Naive thymus-derived CD4-positive, alpha-beta T cell (primary cell): ENCODE measurements at regions of chr22 and their contacts with region 1.

Region 1: DNA sequence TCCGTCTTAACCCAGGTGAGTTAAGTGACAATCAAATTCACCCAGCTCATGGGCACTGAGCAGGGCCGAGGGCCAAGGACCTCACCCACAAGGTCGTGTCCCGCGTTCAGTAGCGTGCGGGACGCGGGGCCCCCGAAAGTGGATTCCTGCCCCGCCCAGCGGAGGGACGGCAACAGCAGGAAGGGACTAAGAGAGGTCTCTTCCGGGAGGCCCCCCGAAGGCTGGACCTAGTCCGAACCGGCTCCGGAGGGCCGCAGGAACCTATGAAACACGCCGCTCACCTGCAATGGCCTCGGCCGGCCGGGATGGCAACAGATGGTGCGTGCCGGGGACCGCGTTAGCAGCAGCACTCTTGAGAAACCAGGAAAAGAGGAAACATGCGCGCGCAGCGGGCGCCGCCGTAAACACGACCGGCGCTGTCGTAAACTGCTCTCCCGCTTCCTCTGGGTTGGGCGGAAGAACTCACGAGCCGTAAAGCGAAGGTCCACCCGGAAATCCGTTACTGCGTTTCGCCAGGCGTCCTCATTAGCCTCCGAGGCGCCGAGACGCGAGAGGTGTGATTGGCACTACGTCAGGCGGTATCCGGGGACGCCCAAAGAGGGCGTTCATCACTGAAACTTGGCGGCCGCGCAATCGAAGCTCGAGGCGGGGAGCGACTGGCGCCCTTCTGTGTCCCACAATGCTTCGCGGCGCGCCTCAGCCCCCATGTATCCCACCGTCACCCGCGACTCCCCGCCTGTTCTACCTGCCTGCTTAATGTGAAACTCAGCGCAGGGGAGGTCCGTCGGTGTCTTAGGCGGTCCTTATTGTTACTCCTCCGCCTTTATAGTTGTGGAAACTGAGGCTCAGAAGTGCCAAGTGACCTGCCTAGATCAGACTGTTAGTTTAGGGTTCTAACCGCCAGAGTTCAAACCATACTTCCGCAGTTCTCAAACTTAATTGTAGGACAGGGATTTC is at the start of gene EIF3D:
- DNase-seq: peak; percentile 93 to 100 (median 99)
- ATAC-seq: peak; percentile 94
- H3K4me3 ChIP-seq: peak within 1 kb of the TSS; percentile 84
- H3K4me3 Mint-ChIP-seq: peak within 1 kb of the TSS; percentile 78 to 98 (median 96)
- H3K27ac ChIP-seq: peak within 1 kb of the TSS; percentile 92
- H3K27ac Mint-ChIP-seq: peak within 1 kb of the TSS; percentile 94 to 99 (median 98)
- H3K4me1 ChIP-seq: peaks cover 4 to 12% of the 10 kb centered on the region in 2 donors
- H3K4me1 Mint-ChIP-seq: peaks cover 11 to 23% (median 21%) of the 10 kb centered on the region in 7 donors
- H3K27me3 ChIP-seq: no peaks in the 10 kb centered on the region
- H3K27me3 Mint-ChIP-seq: peaks cover 0 to 4% (median 0%) of the 10 kb centered on the region in 5 donors
- total RNA-seq, gene EIF3D: 220 to 257 (median 232) TPM

Region 2: GRCh38 chr22:35648066-35649025 is 880.7 kb before region 1 on chr22 and contains the start of gene APOL6:
- CTCF ChIA-PET with region 1: no interaction called
- POLR2A ChIA-PET with region 1: no interaction called
- intact Hi-C with region 1: loop called in 1 of 2 experiments (anchors 1 kb)
- DNase-seq: peak; percentile 31 to 81 (median 79)
- ATAC-seq: peak; percentile 80
- H3K4me3 ChIP-seq: peak within 1 kb of the TSS; percentile 93
- H3K4me3 Mint-ChIP-seq: peak within 1 kb of the TSS; percentile 95 to 100 (median 100)
- H3K27ac ChIP-seq: peak within 1 kb of the TSS; percentile 96
- H3K27ac Mint-ChIP-seq: peak within 1 kb of the TSS; percentile 97 to 100 (median 100)
- H3K4me1 ChIP-seq: peaks cover 27% of the 10 kb centered on the region in 2 donors
- H3K4me1 Mint-ChIP-seq: peaks cover 17 to 54% (median 41%) of the 10 kb centered on the region in 7 donors
- H3K27me3 ChIP-seq: no peaks in the 10 kb centered on the region
- H3K27me3 Mint-ChIP-seq: no peaks in the 10 kb centered on the region
- total RNA-seq, gene APOL6: 33.4 to 99.8 (median 38.2) TPM

Region 3: DNA sequence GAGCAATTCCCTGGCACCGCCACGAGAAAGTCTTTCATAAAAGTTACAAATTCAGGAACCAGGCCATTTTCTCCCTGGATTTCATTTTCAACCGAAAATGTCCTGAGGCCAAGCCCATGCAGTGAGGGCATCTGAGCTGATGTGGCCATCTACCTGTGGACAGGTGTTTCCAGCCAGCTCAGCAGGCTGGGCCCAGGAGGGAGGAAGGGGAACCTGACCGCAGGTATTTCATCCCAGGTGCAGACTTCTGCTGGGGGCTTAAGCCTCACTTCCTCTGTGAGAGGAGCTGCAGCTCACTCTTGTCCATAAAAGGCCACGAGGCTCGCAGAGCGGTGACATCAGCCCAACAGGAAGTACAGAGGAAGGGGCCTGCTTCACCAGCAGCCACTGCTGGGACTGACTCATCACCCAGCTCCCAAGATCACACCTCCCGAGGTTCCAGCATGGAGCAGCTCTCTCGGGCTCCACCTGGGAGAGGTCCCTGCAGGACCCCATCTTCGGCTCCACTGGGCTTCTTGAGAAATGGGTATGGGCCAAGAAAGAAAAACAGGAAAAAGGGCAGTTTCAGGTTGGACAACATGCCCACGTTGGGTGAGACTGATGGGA is 197.7 kb before region 1 on chr22:
- CTCF ChIA-PET with region 1: no interaction called
- POLR2A ChIA-PET with region 1: no interaction called
- intact Hi-C with region 1: loop called in 1 of 2 experiments (anchors 2 kb)
- DNase-seq: peak; percentile 42 to 83 (median 73)
- ATAC-seq: peak; percentile 78
- H3K4me3 ChIP-seq: peak overlapping the region; percentile 57
- H3K4me3 Mint-ChIP-seq: peak overlapping the region; percentile 83 to 95 (median 92)
- H3K27ac ChIP-seq: peak overlapping the region; percentile 82
- H3K27ac Mint-ChIP-seq: peak overlapping the region; percentile 96 to 100 (median 99)
- H3K4me1 ChIP-seq: peaks cover 87 to 92% of the 10 kb centered on the region in 2 donors
- H3K4me1 Mint-ChIP-seq: peaks cover 84 to 100% (median 98%) of the 10 kb centered on the region in 7 donors
- H3K27me3 ChIP-seq: no peaks in the 10 kb centered on the region
- H3K27me3 Mint-ChIP-seq: no peaks in the 10 kb centered on the region

Region 4: DNA sequence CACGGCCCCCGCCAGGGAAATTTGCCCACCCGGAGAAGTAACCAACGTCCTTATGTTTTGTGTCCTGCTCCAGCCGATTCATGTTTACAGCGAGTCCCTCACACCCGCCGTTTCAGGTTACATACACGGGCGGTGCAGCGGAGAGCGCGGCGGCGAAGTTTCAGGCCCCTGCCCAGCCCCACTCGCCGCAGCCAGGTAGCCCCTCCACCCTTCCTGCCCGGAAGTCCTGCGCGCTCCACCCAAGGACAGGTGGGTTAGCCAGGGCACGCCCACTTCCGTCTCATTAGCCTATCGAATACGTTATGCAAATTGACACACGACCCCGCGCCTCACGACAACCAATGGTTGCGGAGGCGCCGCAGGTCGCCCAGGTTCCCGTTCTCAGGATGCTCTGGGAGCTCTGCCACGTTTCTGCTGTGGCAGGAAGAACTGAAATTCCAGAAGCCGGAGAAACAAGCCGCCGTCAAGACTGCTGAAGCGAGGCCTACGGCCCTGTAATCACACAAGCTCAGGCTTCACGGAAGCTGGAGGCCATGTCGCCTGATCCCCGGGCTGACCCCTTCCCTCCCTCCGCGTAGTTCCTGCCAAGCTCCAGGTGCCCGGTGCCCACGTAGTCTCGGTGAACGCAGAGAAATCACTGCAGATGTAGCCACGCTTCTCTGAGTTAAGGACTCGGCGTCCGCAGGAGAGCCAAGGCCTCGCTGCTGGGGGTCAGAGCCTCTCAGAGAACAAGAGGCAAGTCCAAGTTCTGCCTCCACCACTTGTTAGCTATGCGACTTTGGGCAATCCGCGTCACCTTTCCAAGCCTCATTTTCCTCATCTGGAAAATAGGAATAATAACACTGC is 118.9 kb before region 1 on chr22:
- CTCF ChIA-PET with region 1: no interaction called
- POLR2A ChIA-PET with region 1: no interaction called
- intact Hi-C with region 1: no loop called
- DNase-seq: peak; percentile 46 to 77 (median 70)
- ATAC-seq: peak; percentile 89
- H3K4me3 ChIP-seq: peak overlapping the region; percentile 28
- H3K4me3 Mint-ChIP-seq: peak overlapping the region; percentile 59 to 82 (median 74)
- H3K27ac ChIP-seq: peak overlapping the region; percentile 70
- H3K27ac Mint-ChIP-seq: peak overlapping the region; percentile 69 to 92 (median 87)
- H3K4me1 ChIP-seq: peaks cover 31 to 40% of the 10 kb centered on the region in 2 donors
- H3K4me1 Mint-ChIP-seq: peaks cover 26 to 63% (median 55%) of the 10 kb centered on the region in 7 donors
- H3K27me3 ChIP-seq: no peaks in the 10 kb centered on the region
- H3K27me3 Mint-ChIP-seq: no peaks in the 10 kb centered on the region

Region 5: GRCh38 chr22:36506637-36507517 is 22.2 kb before region 1 on chr22 and contains the start of gene FOXRED2:
- CTCF ChIA-PET with region 1: interaction called, 7 read pairs
- POLR2A ChIA-PET with region 1: interaction called, 22 read pairs
- intact Hi-C with region 1: loop called (anchors 1 kb)
- DNase-seq: peak; percentile 85 to 95 (median 91)
- ATAC-seq: peak; percentile 98
- H3K4me3 ChIP-seq: peak within 1 kb of the TSS; percentile 67
- H3K4me3 Mint-ChIP-seq: peak within 1 kb of the TSS; percentile 39 to 84 (median 71)
- H3K27ac ChIP-seq: peak within 1 kb of the TSS; percentile 72
- H3K27ac Mint-ChIP-seq: peak within 1 kb of the TSS; percentile 26 to 84 (median 62)
- H3K4me1 ChIP-seq: peaks cover 5 to 11% of the 10 kb centered on the region in 2 donors
- H3K4me1 Mint-ChIP-seq: peaks cover 8 to 23% (median 14%) of the 10 kb centered on the region in 7 donors
- H3K27me3 ChIP-seq: no peaks in the 10 kb centered on the region
- H3K27me3 Mint-ChIP-seq: no peaks in the 10 kb centered on the region
- total RNA-seq, gene FOXRED2: 2.3 to 13.1 (median 11.4) TPM

Region 6: DNA sequence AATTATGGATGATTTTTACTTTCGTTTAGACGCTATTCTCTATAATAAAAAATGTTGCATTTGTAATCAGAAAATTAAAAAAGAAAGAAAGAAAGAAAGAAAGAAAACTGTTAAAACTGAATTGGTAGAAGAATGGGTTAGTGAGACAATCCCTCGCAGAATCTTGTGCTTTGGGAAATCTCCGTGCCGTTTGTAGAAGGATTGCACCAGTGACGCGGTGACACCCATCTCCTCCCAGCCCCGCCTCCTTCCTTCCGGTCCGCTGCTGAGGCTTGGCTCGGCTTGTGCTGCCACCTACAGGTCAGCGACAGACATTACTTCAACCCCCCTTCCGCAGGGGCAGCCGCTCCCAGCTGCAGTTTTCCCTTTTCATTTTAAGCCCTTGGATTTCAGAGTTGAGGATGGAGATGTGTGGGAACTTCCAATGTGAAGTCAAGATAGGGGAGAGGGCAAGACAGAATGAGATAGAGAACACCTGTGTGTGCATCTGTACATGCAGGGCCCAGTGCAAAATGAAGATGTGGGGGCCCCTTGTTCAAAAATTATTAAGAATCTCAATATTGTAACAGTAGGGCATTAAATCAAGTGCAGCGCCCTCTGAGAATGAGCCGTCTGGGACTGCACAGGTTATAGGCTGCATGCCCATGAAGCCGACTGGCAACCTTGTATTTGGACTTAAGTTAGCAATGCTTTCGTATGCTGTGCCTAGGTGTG is 449.0 kb after region 1 on chr22:
- CTCF ChIA-PET with region 1: no interaction called
- POLR2A ChIA-PET with region 1: no interaction called
- intact Hi-C with region 1: loop called (anchors 5 kb)
- DNase-seq: peak; percentile 76 to 90 (median 88)
- ATAC-seq: peak; percentile 98
- H3K4me3 ChIP-seq: peak overlapping the region; percentile 69
- H3K4me3 Mint-ChIP-seq: peak overlapping the region; percentile 87 to 99 (median 96)
- H3K27ac ChIP-seq: peak overlapping the region; percentile 77
- H3K27ac Mint-ChIP-seq: peak overlapping the region; percentile 81 to 97 (median 96)
- H3K4me1 ChIP-seq: peaks cover 0 to 4% of the 10 kb centered on the region in 2 donors
- H3K4me1 Mint-ChIP-seq: peaks cover 5 to 16% (median 9%) of the 10 kb centered on the region in 7 donors
- H3K27me3 ChIP-seq: no peaks in the 10 kb centered on the region
- H3K27me3 Mint-ChIP-seq: peaks cover 0 to 25% (median 4%) of the 10 kb centered on the region in 5 donors

Region 7: DNA sequence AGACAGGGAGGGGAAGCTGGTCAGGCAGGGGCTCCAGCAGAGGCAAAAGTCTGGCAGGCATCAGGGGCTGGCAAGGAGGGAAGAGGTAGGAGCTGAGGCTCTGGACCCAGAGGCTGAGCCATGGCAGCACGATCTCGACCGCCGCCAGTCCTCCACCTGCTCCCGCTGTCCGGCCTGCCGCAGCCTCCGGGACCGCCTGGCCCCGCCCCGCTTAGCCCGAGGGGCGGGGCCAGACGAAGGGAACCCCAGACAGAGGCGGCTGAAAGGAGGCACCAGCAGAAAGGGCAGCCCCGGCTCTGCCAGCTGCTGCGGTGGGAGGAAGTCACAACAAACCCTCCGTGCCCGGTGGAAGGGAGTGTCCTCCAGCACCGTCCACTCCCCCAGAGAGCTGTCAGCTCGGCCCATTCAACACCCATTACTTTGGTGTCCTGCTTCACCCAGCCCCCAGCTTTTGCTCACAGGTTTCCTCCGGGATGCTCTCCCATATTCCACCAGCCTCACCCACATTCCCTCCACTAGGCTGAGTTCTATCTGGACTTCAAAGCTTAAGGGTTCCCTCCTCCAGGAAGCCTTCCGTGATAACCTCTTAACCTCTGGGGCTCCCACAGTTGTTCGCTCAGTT is 957.3 kb after region 1 on chr22 and contains the start of gene MFNG:
- CTCF ChIA-PET with region 1: no interaction called
- POLR2A ChIA-PET with region 1: no interaction called
- intact Hi-C with region 1: loop called in 1 of 2 experiments (anchors 10 kb)
- DNase-seq: peak; percentile 57 to 82 (median 61)
- ATAC-seq: peak; percentile 81
- H3K4me3 ChIP-seq: peak within 1 kb of the TSS; percentile 84
- H3K4me3 Mint-ChIP-seq: peak within 1 kb of the TSS; percentile 91 to 99 (median 96)
- H3K27ac ChIP-seq: peak within 1 kb of the TSS; percentile 86
- H3K27ac Mint-ChIP-seq: peak within 1 kb of the TSS; percentile 94 to 99 (median 98)
- H3K4me1 ChIP-seq: peaks cover 25 to 57% of the 10 kb centered on the region in 2 donors
- H3K4me1 Mint-ChIP-seq: peaks cover 53 to 79% (median 68%) of the 10 kb centered on the region in 7 donors
- H3K27me3 ChIP-seq: no peaks in the 10 kb centered on the region
- H3K27me3 Mint-ChIP-seq: no peaks in the 10 kb centered on the region
- total RNA-seq, gene MFNG: 146 to 223 (median 203) TPM